Left cardiac atrium (tissue), 4 donors: ENCODE measurements at regions of chr19 and their contacts with region 1.

Region 1: GRCh38 chr19:49637821-49638738 is 1.9 kb downstream of the RRAS start:
- DNase-seq: peak; percentile 92
- ATAC-seq: peak; percentile 3 to 19

Region 2: GRCh38 chr19:49520705-49521319 is 117.3 kb before region 1 on chr19:
- intact Hi-C with region 1: no loop called
- DNase-seq: no peak
- ATAC-seq: peak; percentile 43 to 66

Region 3: GRCh38 chr19:49590071-49590970 is 47.8 kb before region 1 on chr19:
- intact Hi-C with region 1: loop called in 1 of 2 experiments (anchors 2 kb)
- DNase-seq: peak; percentile 97
- ATAC-seq: peak; percentile 85 to 91